ENCODE measurements at regions of chr13 and their contacts with region 1.

Region 1: GRCh38 chr13:26698392-26699196 is 62.0 kb downstream of the GPR12 start:
- DNase-seq: peak; percentile 73
- H3K4me3 ChIP-seq: peak overlapping the region; percentile 20; the same call in 1 of the 2 replicates
- H3K27ac ChIP-seq: no peak overlapping the region
- H3K27me3 ChIP-seq: peaks cover 3% of the 10 kb centered on the region
- CTCF ChIP-seq: peak; percentile 96

Region 2: DNA sequence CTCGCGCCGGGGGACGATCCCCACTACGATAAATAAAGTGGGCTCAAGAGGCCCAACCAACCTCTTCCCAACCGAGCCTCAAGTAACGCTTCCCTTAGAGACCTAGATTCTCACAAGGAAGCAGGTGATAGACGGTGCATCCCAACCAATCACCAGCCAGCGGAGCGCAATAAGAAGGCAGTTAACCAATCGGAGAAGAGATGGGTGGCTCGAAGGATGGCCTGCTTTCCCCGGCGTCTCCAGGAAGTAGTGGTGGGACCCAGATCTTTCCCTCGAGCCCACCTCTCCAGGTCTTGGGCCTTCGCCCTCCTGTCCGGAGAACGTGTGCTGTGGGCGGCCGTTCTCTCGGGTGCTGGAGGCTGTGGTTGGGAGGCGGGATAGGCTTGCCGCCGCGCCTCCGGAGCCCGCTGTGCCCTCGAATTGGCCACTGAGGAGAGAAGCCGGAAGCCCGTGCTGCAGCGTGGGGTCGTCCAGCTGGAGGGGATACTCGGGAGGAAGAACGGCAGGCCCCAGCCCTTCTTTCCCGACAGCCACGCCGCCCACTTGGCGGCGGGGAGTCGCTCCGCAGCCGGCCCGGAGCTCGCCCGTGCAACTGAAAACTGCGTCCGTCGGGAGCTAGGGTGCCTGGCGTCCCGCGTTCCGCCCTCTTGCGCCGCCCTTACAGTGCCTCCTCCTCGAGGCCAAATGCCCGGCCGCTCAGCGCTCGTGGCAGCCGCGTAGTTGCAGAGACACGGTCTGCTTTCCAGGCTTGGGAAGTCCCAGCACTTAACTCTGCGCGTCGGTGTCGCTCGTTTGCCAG is 476.7 kb before region 1 on chr13 and contains the start of gene RNF6:
- CTCF ChIA-PET with region 1: interaction called, 15 read pairs
- POLR2A ChIA-PET with region 1: interaction called, 3 read pairs
- DNase-seq: peak; percentile 98
- H3K4me3 ChIP-seq: peak within 1 kb of the TSS; percentile 86
- H3K27ac ChIP-seq: peak within 1 kb of the TSS; percentile 98
- H3K27me3 ChIP-seq: no peaks in the 10 kb centered on the region
- CTCF ChIP-seq: no peak
- polyA plus RNA-seq, gene RNF6: 30.5 and 42.5 TPM in 2 replicates

Region 3: GRCh38 chr13:26482451-26483197 is 216.0 kb before region 1 on chr13:
- CTCF ChIA-PET with region 1: interaction called, 83 read pairs
- POLR2A ChIA-PET with region 1: no interaction called
- DNase-seq: no peak
- H3K4me3 ChIP-seq: no peak overlapping the region
- H3K27ac ChIP-seq: no peak overlapping the region
- H3K27me3 ChIP-seq: peaks cover 1% of the 10 kb centered on the region
- CTCF ChIP-seq: peak; percentile 96

Region 4: DNA sequence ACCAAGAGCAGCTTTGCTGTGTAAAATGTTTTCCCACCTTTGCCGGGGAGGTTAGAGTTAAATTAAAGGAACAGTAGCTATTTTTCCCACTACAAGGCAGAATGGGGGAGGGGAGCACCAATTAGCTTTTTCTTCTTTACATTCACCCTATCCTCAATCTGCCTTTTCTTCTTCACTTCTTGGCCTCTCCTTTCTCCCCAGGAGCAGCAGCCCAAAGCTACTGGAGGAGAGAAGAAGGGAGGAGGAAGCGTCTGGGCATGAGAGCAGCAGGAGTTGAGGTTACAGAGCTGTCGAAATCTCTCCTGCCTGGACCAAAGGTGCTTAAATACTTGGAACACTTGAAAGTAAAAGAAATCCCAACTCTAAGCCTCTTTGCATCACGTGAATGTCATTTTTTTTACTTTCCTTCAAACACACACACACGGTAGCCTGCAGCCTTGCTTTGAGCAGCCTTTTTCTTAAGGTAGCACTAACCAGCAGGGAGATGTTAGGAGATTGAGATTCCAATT is 180.1 kb before region 1 on chr13:
- CTCF ChIA-PET with region 1: interaction called, 12 read pairs
- POLR2A ChIA-PET with region 1: no interaction called
- DNase-seq: no peak
- H3K4me3 ChIP-seq: no peak overlapping the region
- H3K27ac ChIP-seq: no peak overlapping the region
- H3K27me3 ChIP-seq: no peaks in the 10 kb centered on the region
- CTCF ChIP-seq: no peak

Region 5: DNA sequence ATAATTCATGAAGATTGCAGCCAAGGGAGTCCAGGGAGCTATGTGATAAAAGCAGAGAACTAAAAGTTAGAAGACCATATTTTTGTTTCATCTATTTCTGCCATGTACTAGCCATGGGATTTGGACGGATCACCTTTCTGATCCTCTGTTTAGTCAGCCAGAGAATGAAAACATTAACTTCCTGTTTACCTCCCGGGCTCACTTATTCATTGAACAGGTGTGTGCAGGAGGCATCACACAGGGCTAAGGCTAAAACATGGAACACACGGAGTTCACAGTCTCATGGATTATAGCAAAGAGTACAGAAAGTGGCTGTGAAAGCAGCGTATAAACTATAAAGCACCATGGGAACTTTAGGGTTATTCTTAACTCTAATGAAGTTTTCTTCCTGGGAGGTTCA is 34.8 kb before region 1 on chr13:
- CTCF ChIA-PET with region 1: interaction called, 31 read pairs
- POLR2A ChIA-PET with region 1: no interaction called
- DNase-seq: no peak
- H3K4me3 ChIP-seq: no peak overlapping the region
- H3K27ac ChIP-seq: no peak overlapping the region
- H3K27me3 ChIP-seq: no peaks in the 10 kb centered on the region
- CTCF ChIP-seq: no peak

Region 6: GRCh38 chr13:26721251-26722121 is 22.9 kb after region 1 on chr13:
- CTCF ChIA-PET with region 1: interaction called, 17 read pairs
- POLR2A ChIA-PET with region 1: no interaction called
- DNase-seq: no peak
- H3K4me3 ChIP-seq: no peak overlapping the region
- H3K27ac ChIP-seq: no peak overlapping the region
- H3K27me3 ChIP-seq: no peaks in the 10 kb centered on the region
- CTCF ChIP-seq: no peak

Region 7: DNA sequence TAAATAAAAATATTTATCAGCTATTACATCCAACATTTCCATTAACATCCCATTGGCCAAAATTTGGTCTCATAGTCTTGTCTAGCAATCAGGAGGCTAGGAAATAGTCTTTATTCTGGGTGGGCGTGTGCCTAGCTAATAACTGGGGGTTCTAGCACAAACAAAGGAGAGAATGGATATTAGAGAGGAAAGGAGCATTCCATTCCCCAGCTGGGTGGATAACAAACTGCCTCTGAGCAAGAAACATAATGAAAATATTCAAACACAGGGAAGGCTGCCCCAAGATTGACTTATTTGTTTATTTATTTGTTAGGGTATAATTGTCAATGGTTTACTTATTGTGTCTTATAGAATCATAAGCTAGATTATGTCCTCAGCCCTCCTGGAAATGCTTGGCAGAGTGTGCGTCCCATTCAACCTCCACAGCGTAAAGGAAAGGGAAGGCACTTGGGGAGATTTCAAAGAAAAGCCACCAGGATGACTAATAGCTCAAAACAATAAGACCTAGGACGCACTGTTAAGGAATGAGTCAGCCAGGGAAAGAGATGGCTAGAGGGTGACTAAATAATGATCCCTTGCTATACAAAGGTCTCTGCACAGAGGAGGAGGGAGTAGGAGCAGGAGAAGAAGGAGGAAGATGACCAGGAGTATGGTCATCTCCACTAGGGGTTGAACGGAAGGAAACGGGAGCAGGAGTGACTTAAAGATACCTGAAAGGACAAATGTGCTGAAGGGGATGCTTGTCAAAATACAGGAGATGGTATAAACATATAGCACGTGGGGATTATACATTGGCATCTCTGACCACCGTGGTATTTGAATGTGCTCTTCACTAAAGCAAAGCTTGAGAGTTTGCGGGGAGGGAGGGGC is 496.5 kb after region 1 on chr13:
- CTCF ChIA-PET with region 1: no interaction called
- POLR2A ChIA-PET with region 1: no interaction called
- DNase-seq: no peak
- H3K4me3 ChIP-seq: no peak overlapping the region
- H3K27ac ChIP-seq: peak overlapping the region; percentile 52
- H3K27me3 ChIP-seq: no peaks in the 10 kb centered on the region
- CTCF ChIP-seq: no peak

Measured in AG04450 (cell line).